Breast epithelium (tissue), 4 donors: ENCODE measurements at regions of chr10 and their contacts with region 1.

Region 1: DNA sequence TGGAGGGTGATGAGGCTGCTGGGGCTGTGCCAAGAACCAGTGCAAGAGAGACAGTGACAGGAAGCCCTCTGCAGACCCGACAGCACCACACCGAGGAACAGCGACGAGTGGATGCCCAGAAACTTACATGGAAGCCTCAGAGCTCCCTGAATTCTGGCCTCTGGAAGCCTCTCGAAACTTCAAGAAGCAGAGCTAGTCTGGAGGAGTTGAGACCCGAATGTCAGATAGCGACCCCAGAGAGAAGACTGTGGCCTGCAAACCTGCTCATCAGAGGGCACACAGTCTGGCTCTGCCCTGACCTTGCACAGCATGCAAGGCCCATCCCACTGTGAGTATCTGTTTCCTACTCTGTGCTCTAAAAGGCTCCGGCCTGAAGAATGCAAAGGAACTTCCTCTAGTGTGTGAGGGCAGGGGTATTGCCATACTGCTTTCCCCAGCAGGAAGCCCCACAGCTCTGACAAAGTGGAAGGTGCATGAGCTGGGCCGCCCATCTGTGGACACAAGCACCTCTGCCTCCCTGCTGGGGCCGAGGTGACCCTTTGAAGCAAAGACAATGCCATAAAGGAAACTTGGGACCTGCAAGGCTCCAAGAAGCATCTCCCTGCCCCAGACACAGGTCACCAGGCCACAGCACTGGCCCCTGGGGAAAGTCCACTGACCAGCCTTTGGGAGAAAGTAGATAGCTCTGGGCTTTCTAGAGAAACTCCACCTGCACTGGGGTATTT is 10.5 kb upstream of the C10orf71 start:
- DNase-seq: no peak
- H3K4me3 ChIP-seq: no peak overlapping the region
- H3K27ac ChIP-seq: no peak overlapping the region
- H3K4me1 ChIP-seq: no peaks in the 10 kb centered on the region
- H3K27me3 ChIP-seq: no peaks in the 10 kb centered on the region
- CTCF ChIP-seq: no peak
- POLR2A ChIP-seq: no peak

Region 2: GRCh38 chr10:49076741-49077521 is 211.6 kb before region 1 on chr10:
- intact Hi-C with region 1: no loop called
- DNase-seq: no peak
- H3K4me3 ChIP-seq: no peak overlapping the region
- H3K27ac ChIP-seq: no peak overlapping the region
- H3K4me1 ChIP-seq: no peaks in the 10 kb centered on the region
- H3K27me3 ChIP-seq: no peaks in the 10 kb centered on the region
- CTCF ChIP-seq: no peak
- POLR2A ChIP-seq: no peak

Region 3: DNA sequence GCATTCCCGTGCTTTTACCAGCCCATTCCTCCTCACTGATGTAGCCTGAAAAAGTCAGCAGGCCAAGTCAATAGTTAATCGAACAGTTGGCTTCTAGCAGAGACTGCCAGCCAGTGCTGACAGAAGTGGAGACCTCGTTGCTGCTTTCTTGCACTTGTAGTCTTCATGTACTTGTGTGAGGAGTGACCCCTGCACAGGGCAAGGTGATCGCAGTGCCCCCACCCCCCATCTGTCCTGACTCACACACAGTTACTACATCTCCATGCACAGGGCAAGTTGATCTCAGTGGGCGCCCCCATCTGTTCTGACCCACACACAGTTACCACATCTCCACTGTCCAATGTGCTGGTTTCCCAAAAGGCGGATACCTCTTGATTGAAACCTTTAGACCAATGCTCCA is 44.7 kb after region 1 on chr10:
- intact Hi-C with region 1: loop called (anchors 1 kb)
- DNase-seq: no peak
- H3K4me3 ChIP-seq: no peak overlapping the region
- H3K27ac ChIP-seq: no peak overlapping the region
- H3K4me1 ChIP-seq: no peaks in the 10 kb centered on the region
- H3K27me3 ChIP-seq: no peaks in the 10 kb centered on the region
- CTCF ChIP-seq: no peak
- POLR2A ChIP-seq: no peak